ENCODE measurements at regions of chr7 and their contacts with region 1.

Region 1: DNA sequence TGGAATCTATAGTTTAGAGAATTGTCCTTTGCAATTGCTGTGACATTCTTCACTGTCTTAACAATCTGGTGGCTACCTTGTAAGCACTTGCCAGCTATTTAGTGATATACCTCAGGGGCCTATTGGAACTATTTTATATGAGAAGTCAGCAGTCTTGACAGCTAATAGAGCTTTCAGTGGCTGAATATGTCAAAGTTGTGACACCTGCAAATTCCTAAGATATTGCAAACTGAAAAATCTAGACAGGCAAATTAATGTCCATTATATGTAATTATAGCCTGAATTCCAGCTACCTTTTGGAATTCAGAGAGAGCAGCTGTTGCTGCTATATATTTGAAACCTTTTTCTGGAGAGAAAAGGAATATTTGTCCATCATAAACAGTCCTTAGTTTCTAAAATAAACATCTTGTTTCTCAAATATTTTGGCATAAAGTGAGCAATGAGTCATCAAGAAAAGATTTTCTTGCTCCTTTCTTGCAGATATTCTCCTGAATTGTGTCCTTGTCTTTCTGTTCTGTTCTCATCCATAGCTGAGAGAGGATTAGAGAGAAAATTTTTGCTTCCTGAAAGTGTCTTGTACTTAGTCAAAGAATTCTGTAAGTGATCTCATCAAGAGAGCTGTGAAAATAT is 408.9 kb upstream of the SEMA3D start:
- DNase-seq: no peak
- ATAC-seq: no peak
- H3K4me3 ChIP-seq: no peak overlapping the region
- H3K27ac ChIP-seq: no peak overlapping the region
- H3K4me1 ChIP-seq: no peaks in the 10 kb centered on the region
- H3K27me3 ChIP-seq: no peaks in the 10 kb centered on the region
- CTCF ChIP-seq: no peak

Region 2: GRCh38 chr7:84538268-84538667 is 1057.5 kb before region 1 on chr7:
- CTCF ChIA-PET with region 1: no interaction called
- POLR2A ChIA-PET with region 1: interaction called, 17 read pairs
- in situ Hi-C with region 1: no loop called
- intact Hi-C with region 1: no loop called
- DNase-seq: no peak
- ATAC-seq: no peak
- H3K4me3 ChIP-seq: no peak overlapping the region
- H3K27ac ChIP-seq: no peak overlapping the region; the same call in 1 of the 2 replicates
- H3K4me1 ChIP-seq: peaks cover 3% of the 10 kb centered on the region; the same call in 1 of the 2 replicates
- H3K27me3 ChIP-seq: no peaks in the 10 kb centered on the region
- CTCF ChIP-seq: no peak

Region 3: DNA sequence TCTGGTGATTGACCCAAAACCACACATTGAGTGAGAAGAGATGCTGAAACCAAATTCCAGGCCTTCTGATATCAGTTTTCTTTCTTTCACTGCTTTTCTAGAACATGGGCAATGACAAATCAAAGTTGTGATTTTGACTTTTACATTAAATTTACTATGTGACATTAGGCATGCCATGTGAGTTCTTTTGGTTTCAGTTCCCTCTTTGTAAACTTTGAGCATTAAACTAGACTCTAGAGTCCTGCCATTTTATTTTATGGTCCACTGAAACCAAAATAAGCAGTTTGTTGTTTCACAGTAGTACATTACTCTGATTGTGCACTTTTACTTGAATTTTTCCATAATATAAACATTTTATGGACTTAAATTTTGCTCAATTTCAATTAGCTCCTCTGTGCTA is 27.8 kb before region 1 on chr7:
- CTCF ChIA-PET with region 1: no interaction called
- POLR2A ChIA-PET with region 1: no interaction called
- in situ Hi-C with region 1: no loop called
- intact Hi-C with region 1: no loop called
- DNase-seq: no peak
- ATAC-seq: no peak
- H3K4me3 ChIP-seq: no peak overlapping the region
- H3K27ac ChIP-seq: no peak overlapping the region
- H3K4me1 ChIP-seq: no peaks in the 10 kb centered on the region
- H3K27me3 ChIP-seq: no peaks in the 10 kb centered on the region
- CTCF ChIP-seq: no peak

Region 4: GRCh38 chr7:85750454-85750949 is 154.7 kb after region 1 on chr7:
- CTCF ChIA-PET with region 1: no interaction called
- POLR2A ChIA-PET with region 1: no interaction called
- in situ Hi-C with region 1: no loop called
- intact Hi-C with region 1: loop called (anchors 10 kb)
- DNase-seq: peak; percentile 39
- ATAC-seq: peak; percentile 87
- H3K4me3 ChIP-seq: no peak overlapping the region
- H3K27ac ChIP-seq: no peak overlapping the region
- H3K4me1 ChIP-seq: no peaks in the 10 kb centered on the region
- H3K27me3 ChIP-seq: no peaks in the 10 kb centered on the region
- CTCF ChIP-seq: peak; percentile 80

Region 5: GRCh38 chr7:85851571-85852193 is 255.9 kb after region 1 on chr7:
- CTCF ChIA-PET with region 1: interaction called, 15 read pairs
- POLR2A ChIA-PET with region 1: no interaction called
- in situ Hi-C with region 1: no loop called
- intact Hi-C with region 1: no loop called
- DNase-seq: no peak
- ATAC-seq: no peak
- H3K4me3 ChIP-seq: no peak overlapping the region
- H3K27ac ChIP-seq: no peak overlapping the region
- H3K4me1 ChIP-seq: no peaks in the 10 kb centered on the region
- H3K27me3 ChIP-seq: no peaks in the 10 kb centered on the region
- CTCF ChIP-seq: peak; percentile 49; the same call in 1 of the 2 replicates

Region 6: GRCh38 chr7:85997515-85997914 is 401.8 kb after region 1 on chr7:
- CTCF ChIA-PET with region 1: no interaction called
- POLR2A ChIA-PET with region 1: no interaction called
- in situ Hi-C with region 1: no loop called
- intact Hi-C with region 1: no loop called
- DNase-seq: no peak
- ATAC-seq: no peak
- H3K4me3 ChIP-seq: no peak overlapping the region
- H3K27ac ChIP-seq: no peak overlapping the region
- H3K4me1 ChIP-seq: no peaks in the 10 kb centered on the region
- H3K27me3 ChIP-seq: no peaks in the 10 kb centered on the region
- CTCF ChIP-seq: no peak

Measured in Panc1 (cell line).